ENCODE measurements at regions of chr5 and their contacts with region 1.

Region 1: GRCh38 chr5:35679357-35679756 is 61.7 kb downstream of the SPEF2 start:
- DNase-seq: no peak

Region 2: DNA sequence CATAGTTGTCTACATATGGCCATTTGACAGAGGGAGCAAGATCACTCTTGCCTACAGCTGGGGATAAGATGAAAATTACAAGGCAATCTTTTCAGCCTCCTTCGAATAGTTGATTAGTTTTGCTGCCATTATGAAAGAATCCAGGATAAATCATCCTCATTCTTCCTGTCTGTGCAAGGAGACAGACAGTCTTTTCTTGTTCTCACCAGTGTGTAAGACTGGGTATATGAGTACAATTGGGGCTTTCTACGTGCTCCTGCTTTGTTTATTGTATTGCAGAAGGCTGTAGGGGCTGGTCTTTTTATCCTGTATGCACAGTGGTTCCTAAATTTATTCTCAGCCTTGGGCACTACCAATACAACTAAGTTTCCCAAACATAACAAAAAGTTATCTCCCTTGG is 15.1 kb after region 1 on chr5:
- intact Hi-C with region 1: loop called in 1 of 2 experiments (anchors 1 kb)
- DNase-seq: no peak